Naive thymus-derived CD8-positive, alpha-beta T cell (primary cell): ENCODE measurements at regions of chr20 and their contacts with region 1.

Region 1: DNA sequence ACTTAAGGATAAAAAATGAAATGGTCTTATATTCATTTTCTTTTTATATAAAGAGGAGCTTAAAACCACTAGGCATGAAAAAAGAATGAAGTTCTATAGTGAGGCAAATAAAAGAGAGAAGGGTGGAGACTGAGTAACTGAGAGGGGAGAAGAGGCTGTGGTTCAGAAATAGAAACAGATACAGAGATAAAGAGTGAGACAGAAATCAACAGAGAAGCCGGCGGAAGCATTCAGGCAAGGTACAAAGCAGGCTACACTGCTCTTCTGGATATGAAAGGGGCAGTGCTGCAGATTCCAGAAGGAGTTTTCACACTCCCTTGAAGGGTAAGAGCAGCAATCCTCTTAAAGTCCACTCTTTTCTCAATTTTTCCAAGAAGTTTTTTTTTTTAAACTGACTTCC is 29.9 kb downstream of the NFATC2 start:
- DNase-seq: peak in 3 of 10 donors; percentile 37 to 53 (median 42)
- ATAC-seq: peak; percentile 80 to 94
- H3K4me3 Mint-ChIP-seq: peak overlapping the region in 9 of 10 donors; percentile 43 to 83 (median 59)
- H3K27ac Mint-ChIP-seq: peak overlapping the region; percentile 84 to 97 (median 90)
- H3K4me1 Mint-ChIP-seq: peaks cover 38 to 90% (median 67%) of the 10 kb centered on the region in 4 donors
- H3K27me3 Mint-ChIP-seq: no peaks in the 10 kb centered on the region

Region 2: GRCh38 chr20:51469578-51470498 is 42.8 kb before region 1 on chr20:
- POLR2A ChIA-PET with region 1: no interaction called
- DNase-seq: no peak
- ATAC-seq: no peak
- H3K4me3 Mint-ChIP-seq: peak overlapping the region in 2 of 10 donors; percentile 45 to 46
- H3K27ac Mint-ChIP-seq: peak overlapping the region; percentile 9 to 92 (median 82)
- H3K4me1 Mint-ChIP-seq: peaks cover 24 to 40% (median 32%) of the 10 kb centered on the region in 4 donors
- H3K27me3 Mint-ChIP-seq: no peaks in the 10 kb centered on the region

Region 3: GRCh38 chr20:51492167-51493092 is 20.2 kb before region 1 on chr20:
- POLR2A ChIA-PET with region 1: interaction called, 11 read pairs
- DNase-seq: no peak
- ATAC-seq: no peak
- H3K4me3 Mint-ChIP-seq: peak overlapping the region in 6 of 10 donors; percentile 15 to 82 (median 54)
- H3K27ac Mint-ChIP-seq: peak overlapping the region in 9 of 10 donors; percentile 79 to 97 (median 93)
- H3K4me1 Mint-ChIP-seq: peaks cover 48 to 90% (median 78%) of the 10 kb centered on the region in 4 donors
- H3K27me3 Mint-ChIP-seq: no peaks in the 10 kb centered on the region

Region 4: DNA sequence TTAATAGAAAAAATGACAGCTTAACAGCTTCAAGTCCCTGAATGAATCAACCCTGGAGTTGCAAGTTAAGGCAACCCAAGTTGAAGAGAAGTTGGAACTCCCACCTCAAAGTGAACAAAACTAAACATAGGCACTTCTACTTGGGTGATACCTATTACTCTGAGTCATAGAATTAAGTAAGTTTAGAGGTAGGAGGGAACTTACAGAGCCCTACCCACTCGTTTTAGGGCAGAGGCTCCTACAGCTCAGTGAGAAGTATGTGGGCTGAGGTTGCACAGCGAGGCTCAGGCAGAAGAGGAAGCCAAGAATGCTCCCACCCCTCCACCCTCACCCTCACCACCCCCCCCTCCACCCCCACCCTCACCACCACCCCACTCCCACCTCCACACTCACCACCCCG is 12.3 kb before region 1 on chr20:
- POLR2A ChIA-PET with region 1: interaction called, 12 read pairs
- DNase-seq: peak in 9 of 10 donors; percentile 25 to 74 (median 47)
- ATAC-seq: peak; percentile 78 to 85
- H3K4me3 Mint-ChIP-seq: peak overlapping the region in 8 of 10 donors; percentile 16 to 72 (median 50)
- H3K27ac Mint-ChIP-seq: peak overlapping the region; percentile 78 to 99 (median 95)
- H3K4me1 Mint-ChIP-seq: peaks cover 51 to 91% (median 86%) of the 10 kb centered on the region in 4 donors
- H3K27me3 Mint-ChIP-seq: no peaks in the 10 kb centered on the region

Region 5: GRCh38 chr20:51541189-51542032 is 28.8 kb after region 1 on chr20:
- POLR2A ChIA-PET with region 1: interaction called, 15 read pairs
- DNase-seq: peak; percentile 44 to 87 (median 78)
- ATAC-seq: peak; percentile 78 to 81
- H3K4me3 Mint-ChIP-seq: peak overlapping the region; percentile 94 to 100 (median 98)
- H3K27ac Mint-ChIP-seq: peak overlapping the region; percentile 85 to 99 (median 97)
- H3K4me1 Mint-ChIP-seq: peaks cover 36 to 63% (median 56%) of the 10 kb centered on the region in 4 donors
- H3K27me3 Mint-ChIP-seq: no peaks in the 10 kb centered on the region